ENCODE measurements at regions of chr1 and their contacts with region 1.

Region 1: DNA sequence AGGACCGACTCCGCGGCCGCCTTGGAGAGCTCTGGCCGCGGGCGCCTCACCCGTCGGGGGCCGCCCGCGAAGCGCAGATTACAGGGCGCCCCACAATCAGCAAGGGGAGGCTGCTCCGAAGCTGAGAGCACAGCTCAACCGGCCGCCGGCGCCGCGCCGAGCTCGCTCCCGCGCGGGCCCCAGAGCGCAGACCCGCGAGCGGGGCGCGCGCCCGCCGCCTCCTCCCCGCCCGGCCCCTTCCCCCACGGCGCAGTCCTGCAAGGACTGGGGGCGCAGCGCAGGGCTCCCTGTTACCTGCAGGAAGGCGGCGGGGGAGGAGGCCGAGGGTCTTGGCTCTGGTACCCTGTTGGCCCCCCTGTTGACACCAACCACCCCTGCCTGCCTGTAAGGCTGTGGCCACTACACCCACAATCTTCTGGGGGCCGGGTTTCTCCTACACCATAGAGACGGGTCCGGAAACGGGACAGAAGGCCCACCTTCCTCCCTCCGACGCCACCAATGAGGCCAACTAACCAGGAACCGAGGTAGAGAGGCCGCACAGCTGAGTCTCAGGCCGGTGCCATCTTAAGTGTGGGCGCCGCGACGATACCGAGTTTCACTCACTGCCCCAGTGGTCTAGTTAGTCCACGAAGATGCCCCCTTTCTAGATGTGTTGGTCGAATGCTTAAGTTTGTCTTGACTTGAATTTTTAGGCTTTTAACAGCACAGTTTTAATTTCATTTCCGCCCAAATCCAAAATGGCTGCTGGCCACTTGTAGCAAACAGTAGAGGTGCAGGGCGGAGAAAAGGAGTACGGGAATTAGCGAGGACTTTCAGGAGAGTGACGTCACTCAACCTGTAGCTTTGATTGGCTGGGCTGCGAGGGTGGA is at the start of gene SCYL3:
- DNase-seq: peak; percentile 94
- ATAC-seq: peak; percentile 89
- H3K4me3 Mint-ChIP-seq: peak within 1 kb of the TSS; percentile 85
- H3K27ac Mint-ChIP-seq: peak within 1 kb of the TSS; percentile 99
- H3K4me1 Mint-ChIP-seq: peaks cover 44% of the 10 kb centered on the region
- H3K27me3 Mint-ChIP-seq: peaks cover 22% of the 10 kb centered on the region
- total RNA-seq, gene SCYL3: 14.6 to 15.1 TPM

Region 2: DNA sequence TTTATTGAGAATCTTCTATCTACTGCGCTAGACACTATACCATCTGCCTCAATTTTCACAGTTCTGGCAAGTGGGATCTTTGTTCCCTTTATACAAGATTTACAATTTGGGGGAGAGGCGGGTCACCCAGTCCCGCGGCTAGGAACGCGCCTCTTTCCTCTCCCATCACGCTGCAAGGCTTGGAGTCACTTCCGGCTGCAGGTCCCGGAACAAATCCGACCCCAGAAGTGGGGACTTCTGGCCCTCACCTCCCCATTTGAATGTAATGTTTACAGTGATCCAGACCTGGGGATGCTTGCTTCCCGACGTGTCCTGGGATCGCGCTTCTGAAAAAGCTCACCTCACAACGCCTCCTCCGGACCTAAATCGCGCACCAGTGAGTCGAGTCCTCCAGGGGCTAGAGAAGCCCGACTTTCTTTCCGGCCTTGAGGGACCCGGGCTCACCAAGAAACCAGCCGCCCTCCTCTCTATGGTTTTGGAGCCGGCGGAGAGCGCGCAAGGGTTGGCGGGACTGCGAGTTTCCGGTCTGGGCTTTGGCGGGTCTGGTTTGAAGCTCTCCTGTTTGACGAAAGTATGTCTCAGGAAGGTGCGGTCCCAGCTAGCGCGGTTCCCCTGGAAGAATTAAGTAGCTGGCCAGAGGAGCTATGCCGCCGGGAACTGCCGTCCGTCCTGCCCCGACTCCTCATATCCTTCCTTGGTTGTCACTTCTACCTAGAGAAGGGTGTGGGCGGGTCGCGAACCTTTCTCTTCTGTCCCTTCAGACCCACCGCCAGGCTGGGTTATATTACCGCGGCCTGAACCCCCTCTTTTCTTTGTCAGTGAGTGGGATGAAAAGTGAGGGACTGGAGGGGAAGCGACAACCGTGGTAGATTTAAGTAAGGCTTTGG is 99.0 kb before region 1 on chr1 and contains the start of gene METTL18:
- CTCF ChIA-PET with region 1: interaction called, 21 read pairs
- POLR2A ChIA-PET with region 1: interaction called, 26 read pairs
- DNase-seq: peak; percentile 96
- ATAC-seq: peak; percentile 96
- H3K4me3 Mint-ChIP-seq: peak within 1 kb of the TSS; percentile 80
- H3K27ac Mint-ChIP-seq: peak within 1 kb of the TSS; percentile 85
- H3K4me1 Mint-ChIP-seq: peaks cover 54% of the 10 kb centered on the region
- H3K27me3 Mint-ChIP-seq: no peaks in the 10 kb centered on the region
- total RNA-seq, gene METTL18: 9.8 to 10.2 TPM

Region 3: DNA sequence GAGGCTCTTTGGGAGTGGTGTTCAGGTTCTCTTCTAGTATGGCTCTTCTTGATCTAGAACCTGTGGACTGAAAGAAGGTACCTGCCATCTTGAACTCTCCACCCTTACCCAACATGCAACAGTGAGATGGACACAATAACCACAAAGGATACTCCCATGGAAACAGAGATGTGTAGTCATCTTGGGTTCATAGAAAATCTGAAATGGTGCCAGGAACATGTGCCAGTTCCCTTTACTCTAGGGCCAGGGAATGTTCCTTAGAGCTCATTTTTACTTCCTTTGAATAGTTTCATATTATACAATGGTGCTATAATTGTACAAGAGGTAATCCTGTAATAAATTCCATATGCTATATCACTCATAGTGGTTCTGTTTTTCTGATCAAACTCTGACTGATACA is 13.2 kb after region 1 on chr1:
- CTCF ChIA-PET with region 1: interaction called, 9 read pairs
- POLR2A ChIA-PET with region 1: interaction called, 20 read pairs
- DNase-seq: no peak
- ATAC-seq: no peak
- H3K4me3 Mint-ChIP-seq: no peak overlapping the region
- H3K27ac Mint-ChIP-seq: no peak overlapping the region
- H3K4me1 Mint-ChIP-seq: peaks cover 34% of the 10 kb centered on the region
- H3K27me3 Mint-ChIP-seq: peaks cover 2% of the 10 kb centered on the region

Region 4: GRCh38 chr1:169928438-169929209 is 34.9 kb after region 1 on chr1:
- CTCF ChIA-PET with region 1: interaction called, 4 read pairs
- POLR2A ChIA-PET with region 1: interaction called, 16 read pairs
- DNase-seq: no peak
- ATAC-seq: peak; percentile 73
- H3K4me3 Mint-ChIP-seq: no peak overlapping the region
- H3K27ac Mint-ChIP-seq: no peak overlapping the region
- H3K4me1 Mint-ChIP-seq: peaks cover 14% of the 10 kb centered on the region
- H3K27me3 Mint-ChIP-seq: no peaks in the 10 kb centered on the region

Region 5: GRCh38 chr1:169959686-169960085 is 66.0 kb after region 1 on chr1:
- CTCF ChIA-PET with region 1: no interaction called
- POLR2A ChIA-PET with region 1: no interaction called
- DNase-seq: no peak
- ATAC-seq: no peak
- H3K4me3 Mint-ChIP-seq: no peak overlapping the region
- H3K27ac Mint-ChIP-seq: no peak overlapping the region
- H3K4me1 Mint-ChIP-seq: no peaks in the 10 kb centered on the region
- H3K27me3 Mint-ChIP-seq: no peaks in the 10 kb centered on the region

Region 6: GRCh38 chr1:170074250-170075157 is 180.8 kb after region 1 on chr1 and contains the start of gene KIFAP3:
- CTCF ChIA-PET with region 1: interaction called, 4 read pairs
- POLR2A ChIA-PET with region 1: interaction called, 15 read pairs
- DNase-seq: peak; percentile 98
- ATAC-seq: peak; percentile 98
- H3K4me3 Mint-ChIP-seq: peak within 1 kb of the TSS; percentile 91
- H3K27ac Mint-ChIP-seq: peak within 1 kb of the TSS; percentile 95
- H3K4me1 Mint-ChIP-seq: peaks cover 48% of the 10 kb centered on the region
- H3K27me3 Mint-ChIP-seq: peaks cover 2% of the 10 kb centered on the region
- total RNA-seq, gene KIFAP3: 20.1 to 21.7 TPM